OCI-LY7 (cell line): ENCODE measurements at regions of chr11 and their contacts with region 1.

Region 1: GRCh38 chr11:67277231-67277961 is 11.1 kb downstream of the GRK2 start:
- DNase-seq: peak; percentile 99
- H3K4me3 ChIP-seq: peak overlapping the region; percentile 61
- H3K27ac ChIP-seq: peak overlapping the region; percentile 98
- H3K4me1 ChIP-seq: peaks cover 69% of the 10 kb centered on the region
- CTCF ChIP-seq: no peak; the same call in 1 of the 2 replicates

Region 2: GRCh38 chr11:65791691-65792213 is 1485.6 kb before region 1 on chr11:
- CTCF ChIA-PET with region 1: no interaction called
- POLR2A ChIA-PET with region 1: no interaction called
- intact Hi-C with region 1: no loop called
- DNase-seq: peak; percentile 84
- H3K4me3 ChIP-seq: no peak overlapping the region
- H3K27ac ChIP-seq: peak overlapping the region; percentile 32
- H3K4me1 ChIP-seq: peaks cover 36% of the 10 kb centered on the region
- CTCF ChIP-seq: peak; percentile 28; the same call in 1 of the 2 replicates

Region 3: DNA sequence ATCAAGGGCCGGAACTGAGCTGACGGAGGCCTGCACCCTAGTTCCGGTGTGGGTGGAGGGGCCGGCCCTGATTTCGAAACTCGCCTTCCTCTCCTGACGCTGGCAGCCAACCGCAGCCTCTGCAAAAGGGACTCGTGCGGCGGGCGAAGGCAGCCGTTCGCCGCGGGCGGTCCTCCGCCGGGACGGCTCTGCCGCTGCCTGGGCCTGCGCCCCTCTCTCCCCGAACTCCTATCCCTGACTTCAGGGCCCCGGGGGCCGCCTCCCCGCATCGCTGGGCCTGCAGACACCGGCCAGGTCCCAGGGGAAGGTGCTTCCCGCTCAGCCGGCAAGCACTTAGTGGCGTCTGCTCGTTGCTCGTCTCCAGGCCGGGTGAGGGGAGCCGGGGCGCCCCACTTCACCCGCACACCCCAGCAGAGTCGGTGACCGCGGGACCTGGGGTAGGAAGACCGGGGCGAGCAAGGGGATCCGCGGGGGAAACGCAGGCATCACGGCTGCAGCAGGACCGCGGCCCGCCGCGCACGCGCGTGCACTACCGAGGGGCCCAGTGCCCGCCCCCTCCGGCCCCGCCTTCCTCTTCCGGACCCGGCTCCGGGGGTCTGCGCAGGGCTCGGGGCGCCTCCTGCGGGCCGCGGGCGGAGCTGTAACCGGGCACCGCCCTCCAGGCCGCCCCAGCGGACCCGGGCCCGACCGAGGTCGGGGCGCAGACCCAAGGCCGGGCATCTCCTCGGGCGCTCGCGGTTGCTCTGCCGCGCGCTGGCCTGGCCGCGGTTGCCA is 11.2 kb after region 1 on chr11:
- CTCF ChIA-PET with region 1: interaction called, 3 read pairs
- POLR2A ChIA-PET with region 1: interaction called, 6 read pairs
- intact Hi-C with region 1: loop called (anchors 1 kb)
- DNase-seq: peak; percentile 94
- H3K4me3 ChIP-seq: peak overlapping the region; percentile 68
- H3K27ac ChIP-seq: peak overlapping the region; percentile 94
- H3K4me1 ChIP-seq: peaks cover 47% of the 10 kb centered on the region
- CTCF ChIP-seq: peak; percentile 67

Region 4: DNA sequence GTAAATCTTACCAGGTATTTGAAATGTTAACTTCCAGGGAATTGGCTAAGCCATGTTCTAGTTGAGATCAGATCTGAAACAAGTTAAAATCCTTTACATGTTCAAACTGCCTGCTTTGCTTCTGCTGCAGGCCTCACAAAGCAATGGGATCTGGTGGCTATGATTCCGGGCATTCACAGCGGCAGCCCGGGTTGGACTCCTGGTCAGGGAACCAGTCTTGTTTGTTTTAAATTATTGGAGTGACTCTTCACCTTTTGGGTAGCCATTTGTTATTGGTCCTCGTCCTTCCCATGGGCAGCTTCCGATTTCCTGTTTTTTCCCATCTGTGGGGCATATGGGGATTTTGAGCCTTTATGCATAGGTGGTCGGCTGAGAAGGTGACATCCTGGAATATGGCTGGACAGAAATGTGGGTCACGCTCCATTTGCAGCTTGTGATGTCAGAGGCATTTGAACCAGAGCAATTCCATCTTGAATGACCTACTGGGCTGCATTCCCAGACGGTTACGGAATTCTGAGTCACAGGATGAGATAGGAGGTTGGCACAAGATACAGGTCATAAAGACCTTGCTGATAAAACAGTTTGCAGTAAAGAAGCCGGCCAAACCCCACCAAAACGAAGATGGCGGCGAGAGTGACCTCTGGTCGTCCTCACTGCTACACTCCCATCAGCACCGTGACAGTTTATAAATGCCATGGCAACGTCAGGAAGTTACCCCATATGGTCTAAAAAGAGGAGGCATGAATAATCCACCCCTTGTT is 286.1 kb after region 1 on chr11:
- CTCF ChIA-PET with region 1: no interaction called
- POLR2A ChIA-PET with region 1: no interaction called
- intact Hi-C with region 1: no loop called
- DNase-seq: no peak
- H3K4me3 ChIP-seq: no peak overlapping the region
- H3K27ac ChIP-seq: no peak overlapping the region
- H3K4me1 ChIP-seq: peaks cover 4% of the 10 kb centered on the region
- CTCF ChIP-seq: no peak